ENCODE measurements at regions of chr11 and their contacts with region 1.

Region 1: GRCh38 chr11:73184953-73185671 is 33.0 kb upstream of the P2RY2 start:
- DNase-seq: peak; percentile 77
- ATAC-seq: peak; percentile 95
- H3K4me3 Mint-ChIP-seq: peak overlapping the region; percentile 40
- H3K27ac Mint-ChIP-seq: no peak overlapping the region
- H3K4me1 Mint-ChIP-seq: peaks cover 6% of the 10 kb centered on the region
- H3K27me3 Mint-ChIP-seq: peaks cover 2% of the 10 kb centered on the region

Region 2: GRCh38 chr11:73236854-73237253 is 51.7 kb after region 1 on chr11:
- CTCF ChIA-PET with region 1: interaction called, 7 read pairs
- POLR2A ChIA-PET with region 1: no interaction called
- intact Hi-C with region 1: loop called (anchors 1 kb)
- DNase-seq: peak; percentile 73
- ATAC-seq: peak; percentile 91
- H3K4me3 Mint-ChIP-seq: no peak overlapping the region
- H3K27ac Mint-ChIP-seq: no peak overlapping the region
- H3K4me1 Mint-ChIP-seq: no peaks in the 10 kb centered on the region
- H3K27me3 Mint-ChIP-seq: no peaks in the 10 kb centered on the region

Region 3: GRCh38 chr11:73242251-73243079 is 57.4 kb after region 1 on chr11:
- CTCF ChIA-PET with region 1: interaction called, 8 read pairs
- POLR2A ChIA-PET with region 1: no interaction called
- intact Hi-C with region 1: loop called (anchors 1 kb)
- DNase-seq: peak; percentile 87
- ATAC-seq: peak; percentile 93
- H3K4me3 Mint-ChIP-seq: no peak overlapping the region
- H3K27ac Mint-ChIP-seq: no peak overlapping the region
- H3K4me1 Mint-ChIP-seq: peaks cover 2% of the 10 kb centered on the region
- H3K27me3 Mint-ChIP-seq: no peaks in the 10 kb centered on the region

Region 4: GRCh38 chr11:73288873-73289707 is 104.0 kb after region 1 on chr11:
- CTCF ChIA-PET with region 1: interaction called, 4 read pairs
- POLR2A ChIA-PET with region 1: no interaction called
- intact Hi-C with region 1: loop called (anchors 1 kb)
- DNase-seq: peak; percentile 75
- ATAC-seq: peak; percentile 86
- H3K4me3 Mint-ChIP-seq: no peak overlapping the region
- H3K27ac Mint-ChIP-seq: no peak overlapping the region
- H3K4me1 Mint-ChIP-seq: peaks cover 6% of the 10 kb centered on the region
- H3K27me3 Mint-ChIP-seq: no peaks in the 10 kb centered on the region

Region 5: GRCh38 chr11:73414977-73415651 is 230.0 kb after region 1 on chr11:
- CTCF ChIA-PET with region 1: no interaction called
- POLR2A ChIA-PET with region 1: no interaction called
- intact Hi-C with region 1: no loop called
- DNase-seq: no peak
- ATAC-seq: peak; percentile 53
- H3K4me3 Mint-ChIP-seq: no peak overlapping the region
- H3K27ac Mint-ChIP-seq: no peak overlapping the region
- H3K4me1 Mint-ChIP-seq: peaks cover 4% of the 10 kb centered on the region
- H3K27me3 Mint-ChIP-seq: no peaks in the 10 kb centered on the region

Measured in activated CD4-positive, alpha-beta T cell treated with anti-CD3 and anti-CD28 coated beads for 36 hours (primary cell).